Endothelial cell of umbilical vein (primary cell): ENCODE measurements at regions of chr4 and their contacts with region 1.

Region 1: DNA sequence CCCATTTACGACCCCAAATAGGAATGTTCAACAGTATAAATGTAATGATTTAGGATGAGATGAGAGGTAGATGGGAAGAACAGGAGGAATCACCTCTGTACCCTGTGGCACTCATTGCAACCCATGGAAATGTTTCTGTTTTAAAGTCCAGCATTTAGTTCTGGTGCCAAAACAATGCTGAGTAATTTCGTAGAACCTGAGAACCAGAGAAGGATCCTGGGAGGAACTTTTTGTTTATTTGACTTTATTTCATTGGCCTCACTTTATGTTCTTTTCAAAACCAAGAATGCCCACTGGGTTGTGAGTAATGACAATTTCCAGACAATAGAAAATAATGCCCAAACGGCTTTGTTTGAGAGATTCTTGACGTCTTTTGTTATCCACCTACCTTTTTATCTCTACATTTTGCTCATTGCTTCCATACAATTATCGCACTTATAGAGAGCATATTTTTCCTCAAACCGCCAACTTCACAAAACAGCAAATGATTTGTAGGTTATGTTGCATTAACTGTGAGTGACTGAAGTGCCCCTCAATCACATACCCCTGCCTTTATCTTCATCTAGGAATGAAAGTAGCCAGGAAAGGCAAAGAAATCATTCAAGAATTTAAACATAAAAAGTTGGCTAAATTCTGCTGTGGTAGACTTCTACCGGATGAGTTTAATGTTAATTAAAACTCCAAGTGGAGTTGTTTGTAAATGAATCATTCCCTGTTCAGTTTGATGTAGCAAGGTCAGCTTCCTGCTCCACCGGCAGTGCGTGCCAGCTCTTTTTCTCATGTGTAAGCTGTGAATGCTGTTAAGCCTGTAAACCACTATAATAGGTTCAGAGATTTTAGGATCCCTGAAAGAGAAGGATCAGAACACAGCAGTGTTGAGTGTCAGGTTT is 111.5 kb downstream of the SHROOM3 start:
- DNase-seq: peak; percentile 90
- H3K4me3 ChIP-seq: peak overlapping the region in 2 of 3 experiments; percentile 9 to 59
- H3K27ac ChIP-seq: peak overlapping the region; percentile 84
- H3K4me1 ChIP-seq: peaks cover 19% of the 10 kb centered on the region
- H3K27me3 ChIP-seq: no peaks in the 10 kb centered on the region
- CTCF ChIP-seq: no peak
- POLR2A ChIP-seq: no peak

Region 2: GRCh38 chr4:76579610-76580375 is 33.3 kb after region 1 on chr4:
- CTCF ChIA-PET with region 1: no interaction called
- POLR2A ChIA-PET with region 1: no interaction called
- dilution Hi-C with region 1: no loop called
- intact Hi-C with region 1: no loop called
- DNase-seq: no peak
- H3K4me3 ChIP-seq: no peak overlapping the region
- H3K27ac ChIP-seq: no peak overlapping the region
- H3K4me1 ChIP-seq: no peaks in the 10 kb centered on the region
- H3K27me3 ChIP-seq: peaks cover 0 to 4% of the 10 kb centered on the region in 2 experiments
- CTCF ChIP-seq: no peak
- POLR2A ChIP-seq: no peak

Region 3: DNA sequence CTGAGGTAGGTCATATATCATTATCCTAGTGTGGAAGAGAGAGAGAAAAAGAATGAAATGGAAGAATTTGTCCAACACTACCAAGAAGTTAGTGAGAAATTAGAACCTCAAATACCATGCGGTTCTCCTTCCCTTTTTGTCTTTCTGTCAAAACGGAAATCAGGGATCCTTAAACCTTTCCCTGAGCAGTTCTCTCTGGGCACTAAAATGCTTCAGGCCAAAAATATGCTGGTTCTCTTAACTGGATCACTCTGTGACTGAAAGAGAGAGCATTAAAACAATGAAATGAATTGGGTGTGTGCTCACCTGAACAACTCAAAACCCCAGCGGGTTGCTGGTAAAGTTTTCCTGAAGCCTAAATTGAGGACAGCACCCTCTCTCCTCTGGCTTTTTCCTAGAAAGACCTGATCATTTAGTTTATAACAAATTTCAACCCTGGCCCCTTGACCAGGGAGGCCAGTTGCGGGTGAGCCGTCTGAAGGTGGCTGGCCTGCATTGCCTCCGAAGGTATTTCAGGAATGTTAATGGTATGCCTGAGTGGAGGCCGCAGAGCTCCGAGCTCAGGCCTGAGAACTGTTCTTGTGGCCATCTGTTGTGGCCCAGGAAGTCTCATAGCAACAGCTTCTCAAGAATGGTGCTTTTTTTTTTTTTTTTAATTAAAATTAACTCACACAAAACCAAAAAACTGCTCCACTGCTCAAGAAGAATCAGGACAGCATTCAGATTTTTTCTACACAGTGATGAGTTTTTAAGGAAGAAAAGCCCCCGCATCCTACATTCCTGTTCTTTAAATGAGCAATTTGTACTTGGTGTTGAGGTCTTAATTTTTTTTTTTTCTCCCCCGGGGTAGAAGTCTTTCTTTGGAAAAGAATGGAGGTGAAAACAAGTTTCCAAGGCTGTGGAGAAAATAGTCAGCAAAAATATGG is 43.6 kb after region 1 on chr4:
- CTCF ChIA-PET with region 1: interaction called, 3 read pairs
- POLR2A ChIA-PET with region 1: no interaction called
- dilution Hi-C with region 1: no loop called
- intact Hi-C with region 1: loop called (anchors 2 kb)
- DNase-seq: no peak
- H3K4me3 ChIP-seq: no peak overlapping the region
- H3K27ac ChIP-seq: no peak overlapping the region
- H3K4me1 ChIP-seq: no peaks in the 10 kb centered on the region
- H3K27me3 ChIP-seq: no peaks in the 10 kb centered on the region
- CTCF ChIP-seq: no peak
- POLR2A ChIP-seq: no peak

Region 4: DNA sequence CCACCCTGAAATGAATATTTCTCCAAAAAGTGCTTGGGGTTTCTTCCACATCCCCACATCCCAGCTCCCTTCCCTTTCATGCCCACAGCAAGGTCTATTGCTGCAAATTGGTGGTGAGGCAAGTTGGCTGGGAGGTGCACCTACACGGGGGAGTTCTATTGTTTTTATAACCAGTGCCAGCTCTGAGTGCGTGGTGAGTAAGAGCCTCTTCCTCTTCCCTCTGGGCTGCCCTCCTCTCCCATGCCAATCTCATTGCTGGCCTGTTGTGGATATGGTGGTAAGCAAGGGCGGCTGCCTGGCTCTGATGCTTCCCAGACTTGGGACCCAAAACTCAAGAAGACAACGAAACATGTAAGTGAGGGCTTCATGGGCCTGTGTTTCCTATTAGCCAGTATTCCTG is 92.8 kb after region 1 on chr4:
- CTCF ChIA-PET with region 1: no interaction called
- POLR2A ChIA-PET with region 1: no interaction called
- dilution Hi-C with region 1: no loop called
- intact Hi-C with region 1: loop called (anchors 5 kb)
- DNase-seq: peak; percentile 56
- H3K4me3 ChIP-seq: peak overlapping the region in 2 of 3 experiments; percentile 64 to 74
- H3K27ac ChIP-seq: peak overlapping the region; percentile 67
- H3K4me1 ChIP-seq: peaks cover 46% of the 10 kb centered on the region
- H3K27me3 ChIP-seq: no peaks in the 10 kb centered on the region
- CTCF ChIP-seq: no peak
- POLR2A ChIP-seq: no peak

Region 5: DNA sequence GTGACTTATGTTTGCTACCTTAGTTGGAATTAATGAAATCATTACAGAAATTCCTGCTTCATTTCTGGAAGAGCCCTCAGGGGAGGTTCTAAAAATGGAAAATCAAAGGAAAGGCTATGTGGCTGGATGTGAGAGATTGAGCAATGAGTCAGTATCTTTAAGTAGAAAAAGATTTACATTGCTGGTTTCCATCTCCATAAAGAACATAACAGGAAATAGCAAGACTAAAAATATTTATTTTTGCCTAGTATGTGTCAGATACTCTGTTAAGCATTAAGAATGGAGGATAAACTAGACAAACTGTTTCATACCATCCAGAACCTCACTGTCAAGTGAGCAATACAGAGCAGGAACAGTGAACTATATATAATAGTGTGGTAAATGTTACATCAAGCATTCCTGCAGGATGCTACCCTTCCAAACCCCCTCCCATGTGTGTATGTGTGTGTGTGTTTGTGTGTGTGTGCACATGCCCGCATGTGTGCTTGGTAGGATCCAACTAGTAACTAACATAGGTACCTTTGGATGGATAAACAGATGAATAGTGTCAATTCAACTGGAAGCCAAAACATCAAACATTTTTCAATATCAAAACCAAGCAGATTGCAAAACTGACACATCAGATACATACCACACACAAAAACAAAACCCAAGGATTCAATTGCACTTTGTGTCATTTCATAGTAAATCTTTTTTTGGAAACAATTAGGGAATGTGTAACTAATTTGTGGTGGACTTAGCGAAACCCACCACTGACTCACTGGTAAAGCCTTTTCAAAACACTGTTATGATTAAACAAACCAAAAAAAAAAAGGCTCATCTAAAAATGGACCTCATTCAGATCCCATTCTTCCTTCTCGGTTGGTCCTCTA is 111.9 kb after region 1 on chr4:
- CTCF ChIA-PET with region 1: no interaction called
- POLR2A ChIA-PET with region 1: no interaction called
- dilution Hi-C with region 1: no loop called
- intact Hi-C with region 1: loop called (anchors 1 kb)
- DNase-seq: peak; percentile 79
- H3K4me3 ChIP-seq: no peak overlapping the region
- H3K27ac ChIP-seq: peak overlapping the region; percentile 83
- H3K4me1 ChIP-seq: peaks cover 23% of the 10 kb centered on the region
- H3K27me3 ChIP-seq: no peaks in the 10 kb centered on the region
- CTCF ChIP-seq: no peak
- POLR2A ChIP-seq: peak; percentile 39